CD8-positive, alpha-beta T cell (primary cell): ENCODE measurements at regions of chr2 and their contacts with region 1.

Region 1: DNA sequence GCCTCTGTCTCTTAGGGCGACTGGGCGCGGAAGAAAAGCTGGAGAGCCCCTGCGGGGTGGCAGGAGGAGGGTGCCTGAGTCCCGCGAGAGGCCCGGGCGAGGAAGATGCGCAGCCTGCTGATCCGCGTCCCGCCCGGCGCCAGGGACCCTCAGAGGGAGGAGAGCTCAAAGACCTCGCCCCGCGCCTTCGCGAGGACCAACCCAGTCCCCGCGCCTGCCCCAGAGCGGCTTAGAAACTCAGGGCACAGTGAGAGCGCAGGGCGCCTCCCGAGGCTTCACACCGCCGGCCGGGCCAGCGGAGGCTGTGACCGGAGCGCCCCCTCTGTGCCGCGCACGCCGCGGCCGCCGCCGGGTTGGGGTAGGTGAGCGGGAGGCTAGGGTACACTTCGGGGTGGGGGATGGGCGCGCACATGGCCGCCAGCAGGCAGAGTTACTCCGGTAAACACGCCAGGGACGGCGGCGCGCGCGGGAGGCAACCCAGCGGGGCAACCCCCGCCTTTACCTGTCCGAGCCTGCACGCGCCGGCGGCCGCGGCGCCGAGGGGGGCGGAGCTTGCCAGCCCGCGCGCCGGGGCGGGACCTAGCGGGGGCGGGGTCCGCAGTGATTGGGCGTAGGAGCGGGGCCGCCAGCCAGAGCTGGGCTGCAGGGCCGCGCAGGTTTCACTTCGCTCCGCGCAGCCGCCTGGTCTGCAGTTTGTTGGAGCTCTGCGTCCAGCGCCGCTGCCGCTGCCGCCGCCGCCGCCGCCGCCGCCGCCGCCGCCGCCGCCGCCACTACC is at the start of gene BCL2L11:
- DNase-seq: peak; percentile 81 to 94 (median 88)
- ATAC-seq: peak; percentile 71
- H3K4me3 ChIP-seq: peak within 1 kb of the TSS; percentile 90 to 91
- H3K4me3 Mint-ChIP-seq: peak within 1 kb of the TSS; percentile 90
- H3K27ac ChIP-seq: peak within 1 kb of the TSS; percentile 37 to 50
- H3K27ac Mint-ChIP-seq: peak within 1 kb of the TSS; percentile 72
- H3K4me1 ChIP-seq: peaks cover 48% of the 10 kb centered on the region
- H3K4me1 Mint-ChIP-seq: peaks cover 55% of the 10 kb centered on the region
- H3K27me3 ChIP-seq: peaks cover 23 to 43% of the 10 kb centered on the region in 2 experiments
- H3K27me3 Mint-ChIP-seq: peaks cover 24% of the 10 kb centered on the region
- CTCF ChIP-seq: no peak
- total RNA-seq, gene BCL2L11: 38.7 to 40.1 TPM

Region 2: GRCh38 chr2:110812726-110813645 is 307.5 kb before region 1 on chr2:
- CTCF ChIA-PET with region 1: interaction called, 23 read pairs
- POLR2A ChIA-PET with region 1: interaction called, 7 read pairs
- intact Hi-C with region 1: loop called (anchors 2 kb)
- DNase-seq: no peak
- ATAC-seq: no peak
- H3K4me3 ChIP-seq: no peak overlapping the region
- H3K4me3 Mint-ChIP-seq: no peak overlapping the region
- H3K27ac ChIP-seq: no peak overlapping the region
- H3K27ac Mint-ChIP-seq: no peak overlapping the region
- H3K4me1 ChIP-seq: peaks cover 4% of the 10 kb centered on the region
- H3K4me1 Mint-ChIP-seq: peaks cover 9% of the 10 kb centered on the region
- H3K27me3 ChIP-seq: no peaks in the 10 kb centered on the region
- H3K27me3 Mint-ChIP-seq: peaks cover 2% of the 10 kb centered on the region
- CTCF ChIP-seq: no peak

Region 3: GRCh38 chr2:111135910-111136297 is 15.5 kb after region 1 on chr2:
- CTCF ChIA-PET with region 1: interaction called, 7 read pairs
- POLR2A ChIA-PET with region 1: interaction called, 3 read pairs
- intact Hi-C with region 1: loop called in 1 of 2 experiments (anchors 2 kb)
- DNase-seq: peak in 2 of 9 experiments; percentile 17 to 30
- ATAC-seq: no peak
- H3K4me3 ChIP-seq: no peak overlapping the region
- H3K4me3 Mint-ChIP-seq: no peak overlapping the region
- H3K27ac ChIP-seq: no peak overlapping the region
- H3K27ac Mint-ChIP-seq: no peak overlapping the region
- H3K4me1 ChIP-seq: peaks cover 4% of the 10 kb centered on the region
- H3K4me1 Mint-ChIP-seq: peaks cover 18% of the 10 kb centered on the region
- H3K27me3 ChIP-seq: no peaks in the 10 kb centered on the region
- H3K27me3 Mint-ChIP-seq: no peaks in the 10 kb centered on the region
- CTCF ChIP-seq: no peak

Region 4: DNA sequence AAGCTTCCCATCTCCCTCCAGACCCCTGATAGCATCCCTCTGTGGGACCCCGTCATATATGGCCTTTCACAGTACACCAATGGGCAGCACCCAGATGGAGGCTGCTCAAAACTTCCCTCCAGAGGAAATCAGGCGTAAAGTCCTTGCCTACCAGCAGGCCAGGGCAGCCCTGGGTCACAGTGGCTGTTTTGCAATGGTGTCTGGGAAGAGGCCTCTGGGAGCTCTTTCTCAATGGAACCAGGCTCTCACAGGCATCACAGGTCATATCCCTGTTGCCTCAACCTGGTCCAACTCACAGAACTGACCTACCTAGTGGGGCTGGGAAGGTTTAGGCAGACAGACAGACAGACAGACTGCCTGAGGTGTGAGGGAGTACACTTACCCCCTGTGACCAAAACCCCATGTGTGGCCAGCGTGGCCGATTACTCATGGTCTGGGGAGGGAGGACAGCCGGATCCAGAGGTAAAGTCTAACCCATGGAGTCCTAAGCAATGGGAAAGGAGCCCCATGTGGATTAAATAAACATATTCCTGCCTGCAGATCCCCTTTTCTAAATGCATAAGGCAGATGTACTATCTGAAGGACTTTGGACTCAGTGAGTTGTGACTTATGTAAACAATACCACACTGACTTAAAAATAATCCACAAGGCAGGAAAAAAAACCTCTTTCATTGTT is 58.4 kb after region 1 on chr2:
- CTCF ChIA-PET with region 1: no interaction called
- POLR2A ChIA-PET with region 1: no interaction called
- intact Hi-C with region 1: no loop called
- DNase-seq: no peak
- ATAC-seq: no peak
- H3K4me3 ChIP-seq: no peak overlapping the region
- H3K4me3 Mint-ChIP-seq: no peak overlapping the region
- H3K27ac ChIP-seq: no peak overlapping the region
- H3K27ac Mint-ChIP-seq: no peak overlapping the region
- H3K4me1 ChIP-seq: no peaks in the 10 kb centered on the region
- H3K4me1 Mint-ChIP-seq: no peaks in the 10 kb centered on the region
- H3K27me3 ChIP-seq: no peaks in the 10 kb centered on the region
- H3K27me3 Mint-ChIP-seq: peaks cover 6% of the 10 kb centered on the region
- CTCF ChIP-seq: no peak

Region 5: GRCh38 chr2:111883661-111884591 is 763.5 kb after region 1 on chr2 and contains the start of gene ANAPC1:
- CTCF ChIA-PET with region 1: no interaction called
- POLR2A ChIA-PET with region 1: no interaction called
- intact Hi-C with region 1: loop called in 1 of 2 experiments (anchors 10 kb)
- DNase-seq: peak; percentile 69 to 91 (median 86)
- ATAC-seq: peak; percentile 96
- H3K4me3 ChIP-seq: peak within 1 kb of the TSS; percentile 75 to 82
- H3K4me3 Mint-ChIP-seq: peak within 1 kb of the TSS; percentile 96
- H3K27ac ChIP-seq: peak within 1 kb of the TSS; percentile 76 to 81
- H3K27ac Mint-ChIP-seq: peak within 1 kb of the TSS; percentile 98
- H3K4me1 ChIP-seq: peaks cover 8% of the 10 kb centered on the region
- H3K4me1 Mint-ChIP-seq: peaks cover 14% of the 10 kb centered on the region
- H3K27me3 ChIP-seq: no peaks in the 10 kb centered on the region
- H3K27me3 Mint-ChIP-seq: no peaks in the 10 kb centered on the region
- CTCF ChIP-seq: no peak
- total RNA-seq, gene ANAPC1: 39.6 to 43.9 TPM